ENCODE measurements at regions of chr2 and their contacts with region 1.

Region 1: GRCh38 chr2:55050133-55050994 is at the start of gene RTN4:
- DNase-seq: peak; percentile 99
- H3K4me3 ChIP-seq: peak within 1 kb of the TSS; percentile 76 to 100 (median 98)
- H3K27ac ChIP-seq: peak within 1 kb of the TSS; percentile 99
- H3K4me1 ChIP-seq: peaks cover 10% of the 10 kb centered on the region
- H3K27me3 ChIP-seq: no peaks in the 10 kb centered on the region
- CTCF ChIP-seq: peak in 1 of 2 donors; percentile 9
- total RNA-seq, gene RTN4: 222 to 401 TPM

Region 2: GRCh38 chr2:54787755-54788366 is 262.5 kb before region 1 on chr2:
- CTCF ChIA-PET with region 1: no interaction called
- dilution Hi-C with region 1: no loop called
- in situ Hi-C with region 1: no loop called
- intact Hi-C with region 1: no loop called
- DNase-seq: no peak
- H3K4me3 ChIP-seq: no peak overlapping the region
- H3K27ac ChIP-seq: no peak overlapping the region
- H3K4me1 ChIP-seq: no peaks in the 10 kb centered on the region
- H3K27me3 ChIP-seq: no peaks in the 10 kb centered on the region
- CTCF ChIP-seq: no peak

Region 3: DNA sequence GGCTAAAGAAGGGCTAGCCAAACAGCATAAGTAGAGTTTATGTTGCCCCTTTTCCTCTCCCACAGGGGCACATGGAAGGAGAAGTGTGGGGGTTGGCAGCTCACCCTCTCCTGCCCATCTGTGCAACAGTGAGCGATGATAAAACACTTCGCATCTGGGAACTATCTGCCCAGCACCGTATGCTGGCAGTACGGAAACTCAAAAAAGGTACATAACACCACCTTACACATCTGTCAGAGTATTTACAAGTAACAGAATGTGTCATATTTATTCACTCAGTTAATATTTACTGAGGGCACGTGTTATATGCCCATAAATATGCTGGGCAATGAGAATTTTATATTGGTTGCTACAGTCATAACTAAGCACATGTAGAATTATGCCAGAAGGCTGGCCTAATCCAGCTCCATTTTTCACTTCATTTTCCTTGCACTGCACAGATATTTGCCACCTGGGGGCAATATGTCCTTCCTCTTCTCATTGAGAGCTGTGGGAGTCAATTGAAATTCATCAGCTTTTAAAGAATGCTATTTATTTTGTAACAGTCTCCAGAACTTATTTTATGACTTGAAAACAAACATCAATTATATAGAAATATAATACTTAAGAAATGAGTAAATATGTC is 150.7 kb before region 1 on chr2:
- CTCF ChIA-PET with region 1: interaction called, 6 read pairs
- dilution Hi-C with region 1: no loop called
- in situ Hi-C with region 1: no loop called
- intact Hi-C with region 1: loop called (anchors 1 kb)
- DNase-seq: peak; percentile 53
- H3K4me3 ChIP-seq: no peak overlapping the region
- H3K27ac ChIP-seq: no peak overlapping the region
- H3K4me1 ChIP-seq: peaks cover 18% of the 10 kb centered on the region
- H3K27me3 ChIP-seq: no peaks in the 10 kb centered on the region
- CTCF ChIP-seq: peak; percentile 56 to 72

Region 4: DNA sequence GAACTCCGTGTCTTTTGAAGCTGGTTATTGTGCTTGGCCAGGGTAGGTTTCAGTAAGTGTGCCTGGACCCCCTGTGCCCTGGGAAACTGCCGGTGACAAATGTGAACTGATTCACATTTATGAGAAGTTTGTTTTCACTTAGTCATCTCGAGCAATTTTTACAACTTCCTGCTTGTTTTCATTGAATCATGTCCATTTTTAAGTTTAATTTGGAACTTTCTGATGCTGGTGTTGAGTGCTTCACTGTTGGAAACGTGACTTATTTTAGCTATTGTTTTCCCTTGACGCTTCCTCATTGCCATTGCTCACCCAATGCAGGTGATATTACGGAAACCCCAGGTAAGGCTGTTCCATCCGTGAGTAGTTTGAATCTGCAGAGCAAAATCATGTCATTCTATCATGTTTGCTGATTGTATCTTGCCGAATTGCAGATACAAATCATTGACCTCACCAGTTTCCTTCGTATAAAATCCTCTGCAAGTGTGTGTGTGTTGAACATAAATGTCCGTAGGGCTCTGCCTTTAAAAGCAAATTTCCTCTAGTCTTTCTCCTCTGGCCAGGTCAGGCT is 97.3 kb before region 1 on chr2:
- CTCF ChIA-PET with region 1: no interaction called
- dilution Hi-C with region 1: no loop called
- in situ Hi-C with region 1: no loop called
- intact Hi-C with region 1: no loop called
- DNase-seq: no peak
- H3K4me3 ChIP-seq: no peak overlapping the region
- H3K27ac ChIP-seq: no peak overlapping the region
- H3K4me1 ChIP-seq: no peaks in the 10 kb centered on the region
- H3K27me3 ChIP-seq: no peaks in the 10 kb centered on the region
- CTCF ChIP-seq: no peak

Region 5: DNA sequence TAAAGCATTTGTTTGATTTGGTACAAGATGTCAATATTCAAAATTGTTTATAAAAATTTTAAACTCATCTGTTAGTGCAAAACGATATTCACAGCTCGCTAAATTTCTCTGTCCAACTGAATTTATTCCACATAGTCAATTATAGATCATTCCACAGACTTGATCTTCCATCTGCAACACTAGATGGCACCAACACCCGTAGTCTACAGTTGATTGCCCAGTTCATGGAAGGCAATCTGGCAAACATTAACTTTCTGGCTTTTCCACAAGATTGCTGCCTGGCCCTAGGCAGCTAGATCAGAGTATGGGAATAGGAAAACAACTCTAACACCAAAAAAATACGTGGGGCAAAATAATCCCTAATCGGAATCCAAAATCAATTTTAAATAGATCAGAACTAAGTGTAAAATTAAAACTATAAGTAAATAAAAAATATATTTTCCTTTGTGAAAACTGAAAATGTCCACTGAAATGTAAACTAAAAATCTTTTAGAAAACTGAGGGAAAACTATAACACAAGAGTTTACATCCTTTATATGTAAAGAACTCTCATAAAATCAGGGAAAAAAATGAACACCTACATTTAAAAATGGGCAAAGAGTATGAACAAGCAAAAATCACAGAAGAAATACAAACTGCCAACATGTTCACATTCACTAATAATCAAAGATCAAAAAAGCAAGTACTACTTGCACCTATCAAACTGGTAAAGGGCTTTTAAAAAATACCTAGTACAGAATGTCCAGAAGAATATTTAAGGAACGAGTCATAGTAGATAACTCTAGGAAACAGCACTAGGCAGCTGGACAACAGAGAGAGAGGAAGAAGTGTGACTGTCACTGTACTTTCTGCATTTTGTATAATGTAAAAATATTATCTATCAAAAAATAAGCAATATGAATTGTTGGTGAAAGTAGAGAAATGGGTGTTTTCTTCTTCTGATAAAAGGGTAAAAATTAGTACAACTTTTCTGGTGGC is 35.1 kb before region 1 on chr2:
- CTCF ChIA-PET with region 1: no interaction called
- dilution Hi-C with region 1: no loop called
- in situ Hi-C with region 1: no loop called
- intact Hi-C with region 1: loop called (anchors 1 kb)
- DNase-seq: peak; percentile 57
- H3K4me3 ChIP-seq: peak overlapping the region in 1 of 3 experiments; percentile 7
- H3K27ac ChIP-seq: peak overlapping the region; percentile 22
- H3K4me1 ChIP-seq: peaks cover 63% of the 10 kb centered on the region
- H3K27me3 ChIP-seq: no peaks in the 10 kb centered on the region
- CTCF ChIP-seq: peak; percentile 66 to 76

Region 6: GRCh38 chr2:55063713-55064323 is 13.5 kb after region 1 on chr2:
- CTCF ChIA-PET with region 1: interaction called, 11 read pairs
- dilution Hi-C with region 1: no loop called
- in situ Hi-C with region 1: no loop called
- intact Hi-C with region 1: no loop called
- DNase-seq: no peak
- H3K4me3 ChIP-seq: no peak overlapping the region
- H3K27ac ChIP-seq: no peak overlapping the region
- H3K4me1 ChIP-seq: no peaks in the 10 kb centered on the region
- H3K27me3 ChIP-seq: no peaks in the 10 kb centered on the region
- CTCF ChIP-seq: no peak

Region 7: DNA sequence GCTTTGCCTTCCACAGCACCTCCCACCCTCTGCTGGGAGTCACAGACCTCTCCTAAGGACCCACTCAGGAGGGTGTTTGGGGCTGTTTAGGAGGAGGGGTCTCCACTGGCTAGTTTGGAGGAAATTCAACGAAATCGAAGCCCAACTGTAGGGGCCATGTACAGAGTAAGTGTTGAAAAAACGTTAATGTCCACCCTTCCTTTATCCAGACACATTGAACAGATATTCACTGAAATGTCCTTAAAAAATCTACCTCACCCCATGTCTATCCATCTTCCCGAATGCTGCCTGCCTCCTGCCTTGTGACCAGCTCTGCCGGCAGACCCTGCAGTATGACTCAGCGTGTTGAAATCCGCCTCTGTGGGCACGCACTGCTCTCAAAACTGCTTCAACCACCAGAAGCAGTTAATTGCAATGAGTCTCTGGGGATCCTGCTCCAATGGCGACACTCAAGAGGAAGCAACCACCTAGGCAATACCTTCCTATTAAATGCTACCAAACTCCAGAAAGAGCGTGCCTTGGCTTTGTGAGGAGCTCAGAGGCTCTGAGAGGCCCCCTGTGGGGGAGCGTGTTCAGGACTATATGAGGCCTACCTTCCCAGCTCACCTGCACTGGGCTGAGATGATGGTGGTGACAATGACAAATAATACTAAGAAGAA is 61.3 kb after region 1 on chr2:
- CTCF ChIA-PET with region 1: interaction called, 8 read pairs
- dilution Hi-C with region 1: no loop called
- in situ Hi-C with region 1: no loop called
- intact Hi-C with region 1: loop called (anchors 5 kb)
- DNase-seq: no peak
- H3K4me3 ChIP-seq: no peak overlapping the region
- H3K27ac ChIP-seq: no peak overlapping the region
- H3K4me1 ChIP-seq: peaks cover 9% of the 10 kb centered on the region
- H3K27me3 ChIP-seq: no peaks in the 10 kb centered on the region
- CTCF ChIP-seq: no peak

Region 8: DNA sequence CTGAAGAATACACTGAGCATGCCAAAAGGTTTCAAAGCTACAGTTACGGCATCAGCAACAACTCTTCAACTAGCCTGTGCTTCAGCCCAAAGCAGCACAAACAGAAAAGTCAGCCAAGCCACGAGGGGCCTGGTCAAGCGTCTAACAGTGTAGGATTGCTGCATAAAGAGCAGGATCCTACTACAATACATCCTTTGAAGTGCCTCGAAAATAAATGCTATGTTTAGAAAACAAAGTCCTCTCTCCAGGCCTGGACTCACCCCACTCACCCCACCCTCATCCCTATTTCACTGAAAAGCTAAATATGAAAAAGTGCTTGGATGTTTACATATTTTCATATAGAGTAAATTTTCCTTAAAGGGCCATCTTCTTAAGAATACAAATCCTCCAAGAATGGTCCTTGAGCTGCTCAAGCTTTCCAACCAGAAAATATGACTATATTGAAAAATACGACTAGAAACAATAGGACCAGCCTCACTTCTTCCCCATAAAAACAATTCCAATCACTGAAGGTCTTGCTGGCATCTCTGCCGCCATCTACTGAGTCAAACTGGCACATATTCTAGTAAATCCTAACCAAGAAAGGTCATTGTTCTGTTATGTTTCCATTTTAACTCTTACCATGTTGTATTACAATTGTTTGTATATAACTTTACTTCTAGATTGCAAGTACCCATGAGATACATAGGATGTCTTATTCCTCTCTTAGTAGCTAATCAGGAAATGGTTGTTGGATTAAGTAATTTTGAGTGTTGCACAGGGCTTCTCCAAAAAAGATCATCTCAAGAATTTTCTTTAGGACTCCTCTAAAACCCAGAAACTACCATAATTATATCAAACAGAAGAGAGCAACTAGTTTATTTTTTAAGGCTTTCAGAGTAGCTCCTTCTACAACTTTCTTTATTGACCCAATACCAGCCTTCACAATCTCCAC is 118.1 kb after region 1 on chr2:
- CTCF ChIA-PET with region 1: interaction called, 4 read pairs
- dilution Hi-C with region 1: no loop called
- in situ Hi-C with region 1: no loop called
- intact Hi-C with region 1: loop called (anchors 1 kb)
- DNase-seq: peak; percentile 52
- H3K4me3 ChIP-seq: no peak overlapping the region
- H3K27ac ChIP-seq: no peak overlapping the region
- H3K4me1 ChIP-seq: peaks cover 4% of the 10 kb centered on the region
- H3K27me3 ChIP-seq: no peaks in the 10 kb centered on the region
- CTCF ChIP-seq: peak; percentile 82 to 84

Region 9: DNA sequence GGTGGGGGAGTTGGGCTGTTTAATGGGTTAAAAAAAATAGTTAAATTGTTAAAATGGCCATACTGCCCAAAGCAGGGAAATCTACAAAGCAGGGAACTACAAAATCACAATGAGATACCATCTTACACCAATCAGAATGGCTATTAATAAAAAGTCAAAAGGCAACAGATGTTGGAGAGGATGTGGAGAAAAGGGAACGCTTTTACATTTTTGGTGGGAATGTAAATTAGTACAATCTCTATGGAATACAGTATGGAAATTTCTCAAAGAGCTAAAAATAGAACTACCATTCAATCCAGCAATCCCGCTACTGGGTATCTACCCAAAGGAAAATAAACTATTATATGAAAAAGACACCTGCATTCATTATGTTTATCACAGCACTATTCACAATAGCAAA is 154.6 kb after region 1 on chr2:
- CTCF ChIA-PET with region 1: no interaction called
- dilution Hi-C with region 1: no loop called
- in situ Hi-C with region 1: no loop called
- intact Hi-C with region 1: no loop called
- DNase-seq: no peak
- H3K4me3 ChIP-seq: no peak overlapping the region
- H3K27ac ChIP-seq: no peak overlapping the region
- H3K4me1 ChIP-seq: no peaks in the 10 kb centered on the region
- H3K27me3 ChIP-seq: no peaks in the 10 kb centered on the region
- CTCF ChIP-seq: no peak

Region 10: DNA sequence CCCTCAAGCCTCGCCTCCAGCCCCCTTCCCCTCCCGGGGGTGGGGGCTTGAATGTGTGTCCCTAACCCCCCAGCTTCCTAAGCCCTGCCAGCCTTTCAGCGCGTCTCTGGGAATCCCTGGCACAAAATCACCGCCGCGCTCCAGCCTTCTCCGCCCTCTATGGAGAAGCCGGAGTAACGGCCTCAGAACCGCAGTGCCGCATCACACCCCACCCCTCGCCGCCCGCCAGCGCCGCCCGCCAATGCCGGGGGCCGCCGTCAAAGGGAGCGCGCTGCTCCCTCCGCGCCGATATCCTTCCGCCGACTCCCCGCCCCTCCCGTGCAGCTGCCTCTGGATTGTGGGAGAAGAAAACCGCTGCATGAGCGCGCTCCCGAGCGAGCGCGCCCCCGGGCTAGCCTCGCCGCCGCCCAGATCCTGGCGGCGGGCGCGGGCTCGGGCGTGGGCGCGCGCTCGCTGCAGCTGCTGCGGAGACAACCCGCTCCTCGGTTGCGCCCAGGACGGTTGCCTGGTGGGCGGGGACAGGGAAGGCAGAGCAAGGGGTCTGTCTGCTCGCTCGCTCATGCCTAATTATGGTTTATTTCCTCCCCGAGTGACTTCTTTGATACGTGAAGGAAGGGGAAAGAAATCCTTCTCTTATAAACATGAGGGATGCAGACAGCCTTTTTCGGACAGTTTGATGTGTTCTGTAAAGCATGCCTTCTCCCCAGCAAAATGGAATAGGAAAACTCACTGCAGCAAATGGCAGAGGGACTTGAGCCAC is 369.5 kb after region 1 on chr2 and contains the start of gene CCDC88A:
- CTCF ChIA-PET with region 1: no interaction called
- dilution Hi-C with region 1: no loop called
- in situ Hi-C with region 1: no loop called
- intact Hi-C with region 1: loop called (anchors 2 kb)
- DNase-seq: peak; percentile 97
- H3K4me3 ChIP-seq: peak within 1 kb of the TSS; percentile 70 to 98 (median 71)
- H3K27ac ChIP-seq: peak within 1 kb of the TSS; percentile 63
- H3K4me1 ChIP-seq: peaks cover 15% of the 10 kb centered on the region
- H3K27me3 ChIP-seq: no peaks in the 10 kb centered on the region
- CTCF ChIP-seq: no peak
- total RNA-seq, gene CCDC88A: 43.7 to 62.1 TPM

Region 11: GRCh38 chr2:55604027-55604565 is 553.7 kb after region 1 on chr2:
- CTCF ChIA-PET with region 1: no interaction called
- dilution Hi-C with region 1: no loop called
- in situ Hi-C with region 1: no loop called
- intact Hi-C with region 1: no loop called
- DNase-seq: no peak
- H3K4me3 ChIP-seq: no peak overlapping the region
- H3K27ac ChIP-seq: no peak overlapping the region
- H3K4me1 ChIP-seq: no peaks in the 10 kb centered on the region
- H3K27me3 ChIP-seq: no peaks in the 10 kb centered on the region
- CTCF ChIP-seq: no peak